Heart left ventricle (tissue), 16 donors: ENCODE measurements at regions of chr13 and their contacts with region 1.

Region 1: DNA sequence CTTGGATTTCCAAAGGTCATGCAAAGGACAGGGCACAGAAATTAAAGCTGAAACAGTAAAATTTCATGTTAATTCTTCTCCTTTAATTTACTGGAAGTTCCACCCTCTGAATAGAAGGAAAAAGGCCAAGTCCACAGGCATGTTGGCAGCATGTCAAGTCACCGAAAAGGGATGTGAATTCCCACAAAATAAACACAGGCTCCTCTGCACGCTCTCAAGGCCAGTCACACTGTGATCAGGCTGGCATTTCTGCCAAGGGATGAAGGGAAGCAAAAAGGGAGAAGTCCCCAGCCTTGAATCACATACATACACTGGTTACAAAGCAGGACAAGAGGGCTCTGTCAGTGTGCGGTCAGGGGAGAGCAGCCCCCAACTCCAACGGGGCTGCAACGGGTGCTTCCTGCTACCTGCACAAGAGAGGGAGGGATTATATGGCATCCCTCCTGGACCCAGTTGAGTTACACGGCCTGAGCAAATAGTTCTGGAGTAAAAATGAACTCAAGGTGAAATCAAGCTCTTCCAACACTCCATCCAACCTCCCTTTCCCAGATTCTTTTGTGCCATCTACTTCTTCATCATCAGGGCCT is 6.9 kb downstream of the DCLK1 start:
- DNase-seq: peak in 3 of 5 donors; percentile 24 to 37 (median 36)
- ATAC-seq: peak in 3 of 4 donors; percentile 13 to 43 (median 42)
- H3K4me3 ChIP-seq: no peak overlapping the region
- H3K27ac ChIP-seq: no peak overlapping the region
- H3K4me1 ChIP-seq: peaks cover 0 to 13% (median 4%) of the 10 kb centered on the region in 12 donors
- H3K27me3 ChIP-seq: no peaks in the 10 kb centered on the region
- CTCF ChIP-seq: no peak
- POLR2A ChIP-seq: no peak

Region 2: DNA sequence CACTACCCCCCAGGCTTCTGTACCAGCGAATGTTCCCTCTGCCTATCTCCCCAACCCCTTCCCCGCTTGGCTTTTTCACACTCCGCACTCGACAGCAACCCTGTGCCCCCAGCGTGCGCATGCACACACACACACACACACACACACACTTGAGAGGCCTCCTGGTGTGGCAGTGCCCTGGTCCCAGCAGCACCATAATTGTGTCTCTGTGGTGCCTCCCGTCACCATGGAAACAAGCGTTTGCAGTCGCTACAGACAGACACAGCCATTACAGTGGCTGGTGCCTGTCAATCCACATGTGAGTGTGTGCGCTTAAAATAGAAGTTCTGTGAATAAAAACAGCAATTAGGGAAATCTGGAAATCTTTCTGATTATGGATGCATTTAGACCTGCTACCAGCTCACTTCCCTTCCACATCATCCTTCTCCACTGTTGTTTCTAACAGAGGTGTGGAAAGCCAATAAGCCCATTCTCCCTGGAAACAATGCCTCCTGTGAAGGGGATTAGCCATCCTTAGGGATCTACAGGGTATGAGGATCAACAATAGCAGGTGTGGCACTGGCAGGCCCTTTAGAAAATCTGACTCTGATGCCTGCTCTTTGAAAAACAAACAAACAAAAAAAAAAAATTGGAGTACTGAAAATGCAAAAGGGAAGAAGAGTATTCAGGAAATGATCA is 139.4 kb before region 1 on chr13:
- intact Hi-C with region 1: loop called in 1 of 10 experiments (anchors 10 kb)
- DNase-seq: no peak
- ATAC-seq: peak in 3 of 4 donors; percentile 28 to 43 (median 36)
- H3K4me3 ChIP-seq: no peak overlapping the region
- H3K27ac ChIP-seq: no peak overlapping the region
- H3K4me1 ChIP-seq: peaks cover 0 to 4% (median 0%) of the 10 kb centered on the region in 12 donors
- H3K27me3 ChIP-seq: no peaks in the 10 kb centered on the region
- CTCF ChIP-seq: no peak
- POLR2A ChIP-seq: no peak

Region 3: DNA sequence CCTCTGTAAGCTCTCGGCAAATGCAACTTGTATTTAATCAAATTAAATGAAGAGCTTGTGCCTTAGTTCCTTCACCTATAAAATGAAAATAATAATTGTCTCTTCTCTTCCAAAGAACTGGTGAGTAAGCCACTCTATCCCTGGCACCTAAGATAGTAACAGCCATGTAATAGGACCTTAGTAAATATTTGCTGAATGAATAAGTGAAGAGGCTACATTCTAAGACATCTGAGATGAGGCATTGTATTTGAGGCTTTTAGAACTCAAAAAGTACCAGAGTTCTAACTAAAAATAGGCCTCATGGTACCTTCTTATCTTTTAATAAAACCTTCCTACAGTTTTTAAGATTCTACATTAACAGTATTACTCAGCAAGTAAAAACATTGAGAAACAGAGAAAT is 24.1 kb after region 1 on chr13:
- intact Hi-C with region 1: no loop called
- DNase-seq: no peak
- ATAC-seq: no peak
- H3K4me3 ChIP-seq: no peak overlapping the region
- H3K27ac ChIP-seq: no peak overlapping the region
- H3K4me1 ChIP-seq: peaks cover 0 to 5% (median 0%) of the 10 kb centered on the region in 12 donors
- H3K27me3 ChIP-seq: no peaks in the 10 kb centered on the region
- CTCF ChIP-seq: no peak
- POLR2A ChIP-seq: no peak

Region 4: GRCh38 chr13:36275190-36276002 is 151.1 kb after region 1 on chr13:
- intact Hi-C with region 1: loop called in 1 of 10 experiments (anchors 10 kb)
- DNase-seq: no peak
- ATAC-seq: peak in 3 of 4 donors; percentile 39 to 59 (median 42)
- H3K4me3 ChIP-seq: no peak overlapping the region
- H3K27ac ChIP-seq: no peak overlapping the region
- H3K4me1 ChIP-seq: peaks cover 0 to 3% (median 0%) of the 10 kb centered on the region in 12 donors
- H3K27me3 ChIP-seq: no peaks in the 10 kb centered on the region
- CTCF ChIP-seq: peak; percentile 48 to 79 (median 64)
- POLR2A ChIP-seq: no peak